Prostate gland (tissue), 2 donors: ENCODE measurements at regions of chr12 and their contacts with region 1.

Region 1: DNA sequence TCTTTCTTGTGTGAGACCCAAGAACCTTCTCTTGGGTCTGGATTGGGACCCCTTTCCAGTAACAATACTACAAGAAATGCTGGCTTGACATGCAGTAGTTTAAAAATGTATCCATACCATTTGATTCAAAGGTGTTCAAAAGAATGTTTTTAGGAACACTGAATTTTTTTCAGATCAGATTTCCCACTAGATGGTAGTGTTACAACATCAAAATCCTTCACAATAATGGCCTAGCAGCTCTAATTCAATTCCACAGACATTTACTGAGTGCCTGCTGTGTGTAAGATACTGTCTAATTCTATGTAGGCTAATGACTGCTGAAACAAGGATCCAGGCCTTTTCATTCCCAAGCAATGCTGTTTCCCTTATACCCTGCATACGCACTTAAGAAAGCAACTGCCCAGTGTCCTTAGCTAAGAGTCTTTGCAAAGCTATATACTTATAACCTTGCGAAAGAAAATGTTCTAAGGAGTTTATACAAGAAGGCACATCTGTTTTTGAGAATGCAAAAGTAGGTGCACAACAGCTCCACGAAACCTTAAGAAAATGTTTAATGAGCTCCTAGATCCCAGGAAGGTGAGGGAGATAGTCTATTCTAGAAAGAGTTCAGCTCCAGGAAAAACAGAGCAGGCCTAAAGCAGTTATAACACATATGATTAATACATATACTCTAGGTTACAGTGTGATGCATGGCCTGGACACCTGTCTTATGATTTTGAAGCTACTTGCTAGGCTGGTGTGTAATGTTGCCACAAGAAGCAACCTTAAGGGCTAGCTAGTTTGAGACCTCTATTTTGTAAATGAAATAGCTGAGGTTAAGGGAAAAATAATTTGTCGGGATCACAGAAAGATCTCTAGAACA is 50.9 kb upstream of the PKP2 start:
- DNase-seq: no peak
- H3K4me3 ChIP-seq: no peak overlapping the region
- H3K27ac ChIP-seq: no peak overlapping the region
- H3K4me1 ChIP-seq: no peaks in the 10 kb centered on the region
- H3K27me3 ChIP-seq: no peaks in the 10 kb centered on the region
- CTCF ChIP-seq: peak in 2 of 4 experiments; percentile 31 to 32
- POLR2A ChIP-seq: no peak

Region 2: GRCh38 chr12:32679091-32679919 is 268.1 kb before region 1 on chr12 and contains the start of gene DNM1L:
- intact Hi-C with region 1: no loop called
- DNase-seq: peak; percentile 92
- H3K4me3 ChIP-seq: peak within 1 kb of the TSS; percentile 62 to 75
- H3K27ac ChIP-seq: peak within 1 kb of the TSS; percentile 88 to 91
- H3K4me1 ChIP-seq: peaks cover 5% of the 10 kb centered on the region
- H3K27me3 ChIP-seq: no peaks in the 10 kb centered on the region
- CTCF ChIP-seq: peak in 2 of 4 experiments; percentile 39 to 62
- POLR2A ChIP-seq: peak; percentile 89
- total RNA-seq, gene DNM1L: 37.3 to 47.5 TPM

Region 3: DNA sequence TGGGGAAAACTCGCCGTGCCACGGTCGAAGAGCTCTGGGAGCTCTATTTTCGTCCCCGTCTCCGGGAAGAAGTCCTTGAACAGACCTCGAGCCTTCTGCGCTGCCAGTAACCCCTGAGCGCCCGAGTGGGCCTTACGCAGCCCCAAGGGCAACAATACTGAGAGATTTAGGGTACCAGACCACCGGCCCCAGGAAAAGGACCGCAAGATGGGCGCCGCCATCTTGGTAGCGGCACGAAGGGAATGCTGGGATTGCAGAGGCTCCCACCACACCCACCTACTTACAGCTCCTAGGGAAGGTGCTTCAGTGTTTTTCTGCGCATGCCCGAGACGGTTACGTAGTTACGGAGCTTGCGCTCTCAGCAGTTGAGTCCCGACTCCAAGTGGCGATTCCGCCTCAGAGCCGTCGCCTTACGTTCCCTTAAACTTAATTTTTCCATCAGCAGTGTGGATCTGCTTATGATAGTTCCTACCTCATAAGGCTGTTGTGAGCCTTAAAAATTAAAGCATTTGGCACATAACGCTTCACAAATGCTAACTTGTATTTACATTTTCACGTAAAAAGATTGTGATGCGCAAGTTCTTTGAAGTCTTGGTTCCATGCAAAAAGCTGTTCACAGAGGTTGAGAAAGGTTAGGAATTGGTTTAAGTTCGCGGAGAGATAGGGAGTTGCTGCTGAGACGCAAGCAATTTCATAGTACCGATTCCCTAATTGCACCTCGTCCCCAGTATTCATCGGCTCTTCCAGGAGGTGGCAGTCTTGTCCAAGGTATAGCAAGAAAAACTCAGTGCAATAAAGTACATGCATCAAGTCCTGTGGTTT is 191.6 kb before region 1 on chr12 and contains the start of gene YARS2:
- intact Hi-C with region 1: no loop called
- DNase-seq: peak; percentile 96
- H3K4me3 ChIP-seq: peak within 1 kb of the TSS; percentile 87 to 88
- H3K27ac ChIP-seq: peak within 1 kb of the TSS; percentile 91 to 92
- H3K4me1 ChIP-seq: peaks cover 6% of the 10 kb centered on the region
- H3K27me3 ChIP-seq: no peaks in the 10 kb centered on the region
- CTCF ChIP-seq: peak; percentile 52 to 91 (median 83)
- POLR2A ChIP-seq: peak; percentile 65
- total RNA-seq, gene YARS2: 19.2 to 26.2 TPM

Region 4: GRCh38 chr12:32997471-32997870 is 50.0 kb after region 1 on chr12:
- intact Hi-C with region 1: no loop called
- DNase-seq: no peak
- H3K4me3 ChIP-seq: no peak overlapping the region
- H3K27ac ChIP-seq: no peak overlapping the region
- H3K4me1 ChIP-seq: no peaks in the 10 kb centered on the region
- H3K27me3 ChIP-seq: no peaks in the 10 kb centered on the region
- CTCF ChIP-seq: no peak
- POLR2A ChIP-seq: no peak

Region 5: GRCh38 chr12:34022079-34022830 is 1074.8 kb after region 1 on chr12 and contains the start of gene ALG10:
- intact Hi-C with region 1: loop called (anchors 2 kb)
- DNase-seq: peak; percentile 97
- H3K4me3 ChIP-seq: peak within 1 kb of the TSS; percentile 55 to 70
- H3K27ac ChIP-seq: peak within 1 kb of the TSS; percentile 81 to 86
- H3K4me1 ChIP-seq: no peaks in the 10 kb centered on the region
- H3K27me3 ChIP-seq: no peaks in the 10 kb centered on the region
- CTCF ChIP-seq: peak; percentile 37 to 77 (median 68)
- POLR2A ChIP-seq: no peak
- total RNA-seq, gene ALG10: 19.9 to 26.7 TPM